Right cardiac atrium (tissue), 5 donors: ENCODE measurements at regions of chr5 and their contacts with region 1.

Region 1: DNA sequence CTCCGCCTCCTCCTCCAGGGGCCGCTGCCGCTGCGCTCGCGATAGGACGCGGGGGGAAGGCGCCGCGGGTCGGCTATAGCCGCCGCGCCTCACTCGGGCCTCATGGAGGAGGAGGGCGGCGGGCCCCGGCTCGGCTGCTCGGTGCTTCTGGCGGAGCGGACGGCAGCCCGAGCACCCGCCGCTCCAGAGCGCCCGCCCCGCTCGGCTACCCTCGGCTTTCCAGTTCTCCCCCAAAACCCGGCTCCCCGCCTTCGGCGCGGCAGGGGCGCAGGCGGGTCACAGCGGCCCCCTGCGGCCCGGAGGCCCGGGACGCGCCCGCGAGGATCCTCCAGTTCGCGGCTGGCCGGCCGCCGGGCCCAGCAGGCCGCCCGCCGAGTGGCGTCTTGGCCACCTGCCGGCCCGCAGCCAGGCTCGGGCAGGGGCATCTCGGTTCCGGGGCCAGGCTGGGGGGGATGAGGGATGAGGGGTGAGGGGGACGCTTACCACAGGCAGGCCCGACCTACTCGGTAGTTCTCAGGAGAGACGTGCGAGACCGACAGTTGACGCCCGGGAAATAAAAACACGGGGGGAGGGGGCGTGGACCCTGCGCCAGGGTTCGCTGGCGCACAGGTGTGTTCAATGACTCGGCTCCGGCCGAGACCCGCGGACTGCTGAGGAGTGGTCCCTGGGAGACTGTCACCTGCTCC is at the start of gene PAIP1:
- DNase-seq: peak; percentile 87 to 94 (median 93)
- ATAC-seq: peak; percentile 93 to 96
- H3K4me3 ChIP-seq: peak within 1 kb of the TSS; percentile 73
- H3K27ac ChIP-seq: peak within 1 kb of the TSS; percentile 85
- H3K4me1 ChIP-seq: no peaks in the 10 kb centered on the region
- H3K27me3 ChIP-seq: no peaks in the 10 kb centered on the region
- total RNA-seq, gene PAIP1: 84.2 to 108 (median 101) TPM

Region 2: GRCh38 chr5:43602461-43603343 is 45.7 kb after region 1 on chr5 and contains the start of gene NNT:
- intact Hi-C with region 1: loop called in 3 of 4 experiments (anchors 5 to 10 kb)
- DNase-seq: peak; percentile 81 to 93 (median 93)
- ATAC-seq: peak; percentile 91
- H3K4me3 ChIP-seq: peak within 1 kb of the TSS; percentile 68
- H3K27ac ChIP-seq: peak within 1 kb of the TSS; percentile 90
- H3K4me1 ChIP-seq: no peaks in the 10 kb centered on the region
- H3K27me3 ChIP-seq: no peaks in the 10 kb centered on the region
- total RNA-seq, gene NNT: 371 to 421 (median 408) TPM

Region 3: GRCh38 chr5:43631182-43631910 is 74.3 kb after region 1 on chr5:
- intact Hi-C with region 1: loop called in 1 of 4 experiments (anchors 10 kb)
- DNase-seq: peak in 2 of 3 donors; percentile 29 to 59
- ATAC-seq: peak; percentile 82 to 86
- H3K4me3 ChIP-seq: no peak overlapping the region
- H3K27ac ChIP-seq: peak overlapping the region; percentile 77
- H3K4me1 ChIP-seq: no peaks in the 10 kb centered on the region
- H3K27me3 ChIP-seq: no peaks in the 10 kb centered on the region